Mammary epithelial cell (primary cell): ENCODE measurements at regions of chrX and their contacts with region 1.

Region 1: GRCh38 chrX:40266490-40267333 is 169.0 kb upstream of the BCOR start:
- DNase-seq: peak; percentile 38
- H3K4me3 ChIP-seq: peak overlapping the region; percentile 5 to 53 (median 41)
- H3K27ac ChIP-seq: no peak overlapping the region
- H3K4me1 ChIP-seq: no peaks in the 10 kb centered on the region
- H3K27me3 ChIP-seq: no peaks in the 10 kb centered on the region
- CTCF ChIP-seq: peak; percentile 55 to 78

Region 2: GRCh38 chrX:39261446-39262147 is 1005.1 kb before region 1 on chrX:
- CTCF ChIA-PET with region 1: no interaction called
- dilution Hi-C with region 1: no loop called
- in situ Hi-C with region 1: no loop called
- intact Hi-C with region 1: loop called (anchors 5 kb)
- DNase-seq: peak; percentile 82
- H3K4me3 ChIP-seq: no peak overlapping the region
- H3K27ac ChIP-seq: peak overlapping the region; percentile 43
- H3K4me1 ChIP-seq: peaks cover 24% of the 10 kb centered on the region
- H3K27me3 ChIP-seq: peaks cover 2% of the 10 kb centered on the region
- CTCF ChIP-seq: peak; percentile 45 to 65

Region 3: GRCh38 chrX:39652336-39653131 is 614.2 kb before region 1 on chrX:
- CTCF ChIA-PET with region 1: no interaction called
- dilution Hi-C with region 1: no loop called
- in situ Hi-C with region 1: no loop called
- intact Hi-C with region 1: loop called (anchors 1 kb)
- DNase-seq: no peak
- H3K4me3 ChIP-seq: no peak overlapping the region
- H3K27ac ChIP-seq: no peak overlapping the region
- H3K4me1 ChIP-seq: no peaks in the 10 kb centered on the region
- H3K27me3 ChIP-seq: peaks cover 7% of the 10 kb centered on the region
- CTCF ChIP-seq: peak in 1 of 2 donors; percentile 42

Region 4: GRCh38 chrX:39730662-39731397 is 535.9 kb before region 1 on chrX:
- CTCF ChIA-PET with region 1: no interaction called
- dilution Hi-C with region 1: no loop called
- in situ Hi-C with region 1: no loop called
- intact Hi-C with region 1: loop called (anchors 1 kb)
- DNase-seq: peak; percentile 31
- H3K4me3 ChIP-seq: no peak overlapping the region
- H3K27ac ChIP-seq: no peak overlapping the region
- H3K4me1 ChIP-seq: peaks cover 31% of the 10 kb centered on the region
- H3K27me3 ChIP-seq: no peaks in the 10 kb centered on the region
- CTCF ChIP-seq: peak; percentile 45 to 65

Region 5: GRCh38 chrX:39802908-39803307 is 463.8 kb before region 1 on chrX:
- CTCF ChIA-PET with region 1: no interaction called
- dilution Hi-C with region 1: no loop called
- in situ Hi-C with region 1: no loop called
- intact Hi-C with region 1: no loop called
- DNase-seq: no peak
- H3K4me3 ChIP-seq: no peak overlapping the region
- H3K27ac ChIP-seq: no peak overlapping the region
- H3K4me1 ChIP-seq: peaks cover under 1% of the 10 kb centered on the region
- H3K27me3 ChIP-seq: no peaks in the 10 kb centered on the region
- CTCF ChIP-seq: no peak

Region 6: GRCh38 chrX:40097497-40098263 is 169.0 kb before region 1 on chrX and contains the start of gene BCOR:
- CTCF ChIA-PET with region 1: no interaction called
- dilution Hi-C with region 1: no loop called
- in situ Hi-C with region 1: no loop called
- intact Hi-C with region 1: loop called (anchors 2 kb)
- DNase-seq: peak; percentile 63
- H3K4me3 ChIP-seq: peak within 1 kb of the TSS; percentile 48 to 64 (median 62)
- H3K27ac ChIP-seq: peak within 1 kb of the TSS; percentile 22
- H3K4me1 ChIP-seq: peaks cover 24% of the 10 kb centered on the region
- H3K27me3 ChIP-seq: peaks cover 23% of the 10 kb centered on the region
- CTCF ChIP-seq: no peak
- total RNA-seq, gene BCOR: 7.2 to 9.2 TPM

Region 7: DNA sequence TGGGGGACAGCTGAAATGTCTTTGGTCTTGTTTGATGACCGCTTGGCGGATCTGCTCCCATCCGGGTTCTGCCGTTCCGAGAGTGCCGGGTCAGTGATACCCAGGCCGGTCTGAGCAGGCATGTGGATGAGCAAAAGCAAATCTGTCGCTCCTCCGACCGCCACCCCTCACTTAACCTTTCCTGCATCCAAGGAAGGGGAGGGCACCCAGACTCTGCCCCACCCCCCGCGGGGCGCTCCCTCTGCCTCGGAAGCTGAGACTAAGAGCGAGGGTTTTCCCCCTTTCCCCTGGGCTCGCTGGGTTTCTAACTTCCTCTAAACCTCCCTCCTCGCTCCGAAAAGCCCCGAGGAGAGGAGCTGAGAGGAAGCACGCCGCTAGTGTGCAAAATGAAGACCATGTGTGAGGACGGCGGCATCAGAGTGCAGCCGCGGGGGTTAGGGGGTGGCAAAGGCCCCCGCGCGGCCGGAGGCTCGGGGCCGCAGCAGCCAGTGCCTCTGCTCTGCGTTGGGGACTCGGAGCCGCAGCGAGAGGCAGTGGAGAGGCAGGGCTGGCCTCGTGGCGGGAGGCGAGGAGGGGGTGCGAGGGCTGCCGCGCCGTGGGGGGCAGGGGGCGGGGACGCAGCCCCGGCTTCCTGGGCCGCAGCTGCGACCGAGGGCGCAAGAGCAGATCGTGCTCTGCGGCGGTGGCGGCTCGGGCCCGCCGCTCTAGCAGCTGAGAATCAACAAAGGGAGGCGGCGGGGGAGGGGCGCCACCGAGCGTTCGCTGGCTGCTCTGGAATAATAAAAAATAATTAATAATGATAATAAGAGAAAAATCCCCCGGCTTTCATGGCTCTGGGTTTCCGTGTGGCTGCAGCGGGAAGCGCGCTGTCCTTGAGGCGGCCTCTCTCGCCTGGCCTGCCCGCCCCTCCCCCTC is 113.1 kb before region 1 on chrX:
- CTCF ChIA-PET with region 1: no interaction called
- dilution Hi-C with region 1: no loop called
- in situ Hi-C with region 1: no loop called
- intact Hi-C with region 1: loop called (anchors 5 kb)
- DNase-seq: no peak
- H3K4me3 ChIP-seq: peak overlapping the region in 2 of 3 experiments; percentile 24 to 36
- H3K27ac ChIP-seq: no peak overlapping the region
- H3K4me1 ChIP-seq: peaks cover 18% of the 10 kb centered on the region
- H3K27me3 ChIP-seq: peaks cover 41% of the 10 kb centered on the region
- CTCF ChIP-seq: no peak

Region 8: DNA sequence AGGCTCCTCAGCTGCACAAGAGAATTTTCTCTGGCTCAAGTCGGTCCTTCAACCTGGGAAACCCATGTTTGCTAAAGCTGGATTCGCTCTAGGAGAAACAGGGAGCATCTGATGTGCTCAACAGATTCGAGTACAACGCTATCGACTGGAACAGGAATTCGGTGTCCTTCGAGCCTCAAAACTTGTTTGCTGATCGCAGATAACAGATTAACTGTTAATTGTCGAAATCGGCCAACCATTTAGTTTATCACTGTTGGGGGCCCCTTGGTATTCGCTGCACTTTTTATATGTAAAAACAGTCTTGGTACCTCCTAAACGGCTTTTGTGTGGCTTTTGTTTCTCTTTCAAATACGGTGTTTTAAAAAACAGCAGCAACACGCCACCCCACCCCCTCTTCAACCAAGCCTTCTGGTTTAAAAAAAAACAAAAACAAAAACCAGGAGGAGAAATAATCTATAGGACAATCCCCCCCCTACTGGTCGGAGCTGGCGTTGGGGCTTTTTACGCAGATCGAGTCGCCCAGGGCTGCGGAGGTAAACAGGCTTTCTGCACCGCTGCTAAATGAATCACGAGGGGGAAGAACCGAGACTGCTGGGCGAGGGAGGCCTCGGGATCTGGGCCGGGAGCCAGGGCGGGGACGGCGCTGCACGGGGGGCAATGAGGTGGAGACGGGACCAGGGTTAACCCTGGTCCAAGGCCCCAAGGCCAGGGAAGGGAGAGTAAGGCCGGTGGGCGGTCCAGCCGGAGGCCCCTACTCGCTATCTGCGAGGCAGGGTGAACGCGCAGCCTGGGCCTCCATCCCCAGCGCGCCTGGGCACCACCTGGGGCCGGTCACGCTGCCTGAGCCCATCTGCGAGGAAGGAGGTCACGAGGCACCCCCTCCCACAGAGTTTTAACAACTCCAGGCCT is 97.3 kb before region 1 on chrX:
- CTCF ChIA-PET with region 1: no interaction called
- dilution Hi-C with region 1: no loop called
- in situ Hi-C with region 1: no loop called
- intact Hi-C with region 1: loop called (anchors 10 kb)
- DNase-seq: no peak
- H3K4me3 ChIP-seq: no peak overlapping the region
- H3K27ac ChIP-seq: no peak overlapping the region
- H3K4me1 ChIP-seq: peaks cover 9% of the 10 kb centered on the region
- H3K27me3 ChIP-seq: peaks cover 64% of the 10 kb centered on the region
- CTCF ChIP-seq: peak in 1 of 2 donors; percentile 7